Transverse colon (tissue), 4 donors: ENCODE measurements at regions of chr2 and their contacts with region 1.

Region 1: GRCh38 chr2:149597668-149598326 is 10.2 kb upstream of the MMADHC start:
- DNase-seq: peak; percentile 23
- H3K4me3 ChIP-seq: no peak overlapping the region
- H3K27ac ChIP-seq: no peak overlapping the region
- H3K4me1 ChIP-seq: peaks cover 0 to 4% (median 0%) of the 10 kb centered on the region in 4 donors
- H3K27me3 ChIP-seq: no peaks in the 10 kb centered on the region
- CTCF ChIP-seq: peak; percentile 77 to 83 (median 78)
- EP300 ChIP-seq: no peak
- POLR2A ChIP-seq: no peak

Region 2: DNA sequence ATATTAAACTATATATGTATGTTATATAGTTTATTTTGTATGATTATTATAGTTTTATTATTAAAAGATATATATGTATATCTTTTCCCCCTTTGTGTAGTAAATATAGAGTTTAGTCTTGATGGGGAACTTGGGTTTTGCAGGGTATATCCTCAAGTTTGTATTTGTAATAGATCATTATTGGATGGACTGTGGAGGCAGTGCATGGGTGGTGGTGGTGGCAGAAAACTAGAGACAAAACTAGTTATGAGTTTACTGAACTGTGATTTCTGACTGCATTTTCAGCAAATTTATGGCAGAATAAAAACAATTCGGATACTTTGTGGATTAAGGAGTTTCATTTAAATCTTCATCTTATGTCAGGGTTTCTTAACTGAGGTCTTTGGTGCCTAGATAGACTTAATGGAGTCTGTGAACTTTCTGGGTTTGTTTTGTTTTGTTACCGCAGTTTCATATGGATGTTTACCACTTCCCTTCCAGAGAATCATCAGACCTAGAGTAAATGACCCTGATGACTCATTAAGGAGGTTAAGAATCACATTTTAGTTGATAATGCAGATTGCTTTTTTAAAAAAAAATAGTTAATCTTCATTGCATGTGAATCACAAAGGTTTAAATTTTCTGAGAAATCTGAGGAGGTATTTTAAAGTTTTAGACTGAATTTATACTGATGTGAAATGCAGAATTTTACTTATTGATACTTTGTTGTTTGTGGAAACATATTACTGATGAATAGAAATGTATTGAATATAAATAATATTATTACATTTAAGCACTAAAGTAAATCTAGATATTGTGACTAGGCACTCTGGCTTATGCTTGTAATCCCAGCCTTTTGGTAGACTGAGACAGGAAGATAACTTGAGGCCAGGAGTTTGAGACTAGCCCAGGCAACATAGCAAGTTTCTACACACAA is 938.7 kb before region 1 on chr2:
- in situ Hi-C with region 1: no loop called
- intact Hi-C with region 1: loop called (anchors 5 kb)
- DNase-seq: no peak
- H3K4me3 ChIP-seq: no peak overlapping the region
- H3K27ac ChIP-seq: no peak overlapping the region
- H3K4me1 ChIP-seq: peaks cover 7 to 47% (median 10%) of the 10 kb centered on the region in 4 donors
- H3K27me3 ChIP-seq: no peaks in the 10 kb centered on the region
- CTCF ChIP-seq: no peak
- EP300 ChIP-seq: no peak
- POLR2A ChIP-seq: no peak

Region 3: DNA sequence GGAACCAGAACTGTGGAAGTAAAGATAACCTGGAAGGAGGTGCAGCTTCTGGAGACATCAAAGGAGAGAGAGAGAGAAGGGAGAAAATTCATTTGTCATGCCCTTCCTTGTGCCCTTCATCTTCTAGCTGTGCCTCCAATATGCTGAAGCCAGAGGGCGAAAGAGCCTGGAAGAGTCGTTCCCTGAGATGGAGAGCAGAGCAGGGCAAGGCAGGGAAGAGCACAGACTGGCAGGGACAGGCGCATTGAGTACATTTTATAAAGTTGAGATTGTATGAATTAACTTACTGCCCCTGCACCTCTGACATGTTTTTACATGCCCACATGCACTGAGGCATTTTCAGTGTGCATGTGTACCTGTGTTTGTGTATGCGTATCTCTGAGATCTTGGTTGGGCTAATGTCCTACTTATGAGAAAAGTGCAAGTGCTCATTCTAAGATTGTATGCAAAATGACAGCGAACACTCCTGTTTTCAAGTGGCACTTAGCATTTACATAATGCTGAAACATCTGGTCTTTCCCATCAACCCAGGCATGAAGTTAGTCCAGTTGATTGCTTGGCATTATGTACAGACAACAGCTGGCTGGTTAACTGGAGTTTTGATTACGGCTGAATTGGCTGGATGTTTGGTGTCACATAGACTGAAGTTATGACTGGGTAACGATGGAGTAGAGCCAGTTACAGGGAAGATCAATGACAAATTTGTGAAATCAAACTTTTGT is 13.5 kb after region 1 on chr2:
- in situ Hi-C with region 1: no loop called
- intact Hi-C with region 1: no loop called
- DNase-seq: no peak
- H3K4me3 ChIP-seq: no peak overlapping the region
- H3K27ac ChIP-seq: no peak overlapping the region
- H3K4me1 ChIP-seq: peaks cover 0 to 7% (median 0%) of the 10 kb centered on the region in 4 donors
- H3K27me3 ChIP-seq: no peaks in the 10 kb centered on the region
- CTCF ChIP-seq: no peak
- EP300 ChIP-seq: no peak
- POLR2A ChIP-seq: no peak

Region 4: GRCh38 chr2:150495993-150496627 is 898.3 kb after region 1 on chr2:
- in situ Hi-C with region 1: loop called in 3 of 4 experiments (anchors 10 to 25 kb)
- intact Hi-C with region 1: no loop called
- DNase-seq: no peak
- H3K4me3 ChIP-seq: no peak overlapping the region
- H3K27ac ChIP-seq: no peak overlapping the region
- H3K4me1 ChIP-seq: no peaks in the 10 kb centered on the region
- H3K27me3 ChIP-seq: no peaks in the 10 kb centered on the region
- CTCF ChIP-seq: no peak
- EP300 ChIP-seq: no peak
- POLR2A ChIP-seq: no peak

Region 5: DNA sequence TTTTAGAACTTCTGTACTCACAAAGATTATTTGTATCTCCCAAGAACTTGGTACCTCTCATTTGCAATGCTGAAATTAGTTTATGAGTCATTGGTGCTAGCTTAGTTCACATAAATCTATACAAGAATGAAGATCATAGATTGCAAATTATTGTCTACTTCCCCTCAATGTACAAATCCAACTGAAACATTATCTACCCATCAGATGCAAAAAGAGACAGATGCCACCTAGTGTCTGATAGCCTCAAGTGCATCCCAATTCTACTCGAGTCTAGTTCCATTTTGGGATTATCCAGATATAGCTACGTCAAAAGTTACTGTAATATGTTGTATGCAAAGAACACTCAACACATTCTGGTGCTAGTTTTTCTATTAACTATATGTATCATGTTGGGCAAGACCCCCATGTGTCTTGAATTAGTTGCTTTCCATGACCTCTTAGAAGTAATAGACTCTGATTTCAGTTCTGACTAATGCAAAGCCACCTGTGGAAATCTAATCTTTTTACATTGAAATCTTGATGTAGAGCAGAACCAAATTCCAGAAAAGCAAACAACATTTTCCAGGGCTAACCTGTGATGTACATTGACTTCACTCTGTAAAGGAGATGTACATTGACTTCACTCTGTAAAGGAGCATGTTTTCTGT is 1453.9 kb after region 1 on chr2:
- in situ Hi-C with region 1: loop called (anchors 5 to 25 kb)
- intact Hi-C with region 1: loop called (anchors 10 kb)
- DNase-seq: peak; percentile 11
- H3K4me3 ChIP-seq: no peak overlapping the region
- H3K27ac ChIP-seq: no peak overlapping the region
- H3K4me1 ChIP-seq: peaks cover 0 to 4% (median 0%) of the 10 kb centered on the region in 4 donors
- H3K27me3 ChIP-seq: no peaks in the 10 kb centered on the region
- CTCF ChIP-seq: peak; percentile 55 to 76 (median 74)
- EP300 ChIP-seq: no peak
- POLR2A ChIP-seq: no peak

Region 6: DNA sequence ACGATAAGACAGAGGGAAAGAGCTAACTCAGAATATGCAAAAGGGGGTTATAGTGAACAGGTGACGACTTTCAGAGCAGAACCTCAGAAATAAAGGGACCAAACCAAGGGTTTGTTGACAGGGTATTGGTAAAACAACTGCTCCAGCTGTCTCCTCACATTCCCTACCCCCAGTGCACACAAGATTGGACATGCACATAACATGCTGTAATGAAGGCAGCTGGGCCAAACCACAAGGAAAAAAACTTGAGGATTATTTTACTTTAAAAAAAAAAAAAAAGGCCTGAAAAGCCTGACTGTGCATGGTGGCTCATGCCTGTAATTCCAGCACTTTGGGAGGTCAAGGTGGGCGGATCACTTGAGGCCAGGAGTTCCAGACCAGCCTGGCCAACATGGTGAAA is 1660.3 kb after region 1 on chr2:
- in situ Hi-C with region 1: loop called in 1 of 4 experiments (anchors 10 kb)
- intact Hi-C with region 1: no loop called
- DNase-seq: no peak
- H3K4me3 ChIP-seq: no peak overlapping the region
- H3K27ac ChIP-seq: no peak overlapping the region
- H3K4me1 ChIP-seq: peaks cover 0 to 16% (median 7%) of the 10 kb centered on the region in 4 donors
- H3K27me3 ChIP-seq: no peaks in the 10 kb centered on the region
- CTCF ChIP-seq: no peak
- EP300 ChIP-seq: no peak
- POLR2A ChIP-seq: no peak